ENCODE measurements at regions of chr12 and their contacts with region 1.

Region 1: GRCh38 chr12:30687265-30687986 is 8.2 kb downstream of the IPO8 start:
- DNase-seq: no peak
- H3K4me3 ChIP-seq: no peak overlapping the region
- H3K27ac ChIP-seq: no peak overlapping the region
- H3K4me1 ChIP-seq: no peaks in the 10 kb centered on the region
- H3K27me3 ChIP-seq: no peaks in the 10 kb centered on the region
- CTCF ChIP-seq: no peak
- POLR2A ChIP-seq: no peak

Region 2: DNA sequence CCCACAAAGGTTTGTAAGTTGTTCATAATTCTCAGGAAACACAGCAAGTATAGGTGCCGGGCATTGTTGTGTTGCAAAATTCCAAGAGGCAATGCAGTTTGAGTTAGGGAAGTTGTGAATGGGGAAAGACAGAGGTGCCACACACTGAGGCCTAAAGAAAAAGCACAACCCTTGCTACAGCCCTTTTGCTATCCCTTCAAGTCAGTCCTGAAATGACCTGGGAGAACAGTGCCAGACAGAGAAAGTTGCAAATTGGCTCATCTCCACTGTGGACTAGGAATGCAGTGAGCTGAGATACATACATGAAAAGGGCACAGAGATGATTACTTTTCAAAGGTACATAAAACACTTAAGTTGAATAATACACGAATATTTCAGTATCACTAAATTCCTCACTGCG is 690.4 kb before region 1 on chr12:
- intact Hi-C with region 1: loop called (anchors 5 kb)
- DNase-seq: no peak
- H3K4me3 ChIP-seq: no peak overlapping the region
- H3K27ac ChIP-seq: no peak overlapping the region
- H3K4me1 ChIP-seq: no peaks in the 10 kb centered on the region
- H3K27me3 ChIP-seq: no peaks in the 10 kb centered on the region
- CTCF ChIP-seq: no peak
- POLR2A ChIP-seq: no peak

Region 3: GRCh38 chr12:30985814-30986452 is 298.5 kb after region 1 on chr12:
- intact Hi-C with region 1: no loop called
- DNase-seq: no peak
- H3K4me3 ChIP-seq: no peak overlapping the region
- H3K27ac ChIP-seq: no peak overlapping the region
- H3K4me1 ChIP-seq: no peaks in the 10 kb centered on the region
- H3K27me3 ChIP-seq: no peaks in the 10 kb centered on the region
- CTCF ChIP-seq: peak in 2 of 3 donors; percentile 24 to 64
- POLR2A ChIP-seq: no peak

Measured in breast epithelium (tissue), 4 donors.